Stomach (tissue), 19 donors: ENCODE measurements at regions of chr2 and their contacts with region 1.

Region 1: GRCh38 chr2:219229305-219230058 is at the starts of genes ANKZF1 and ATG9A:
- DNase-seq: peak; percentile 99 to 100
- H3K4me3 ChIP-seq: peak within 1 kb of the TSS; percentile 64 to 82 (median 78)
- H3K27ac ChIP-seq: peak within 1 kb of the TSS; percentile 95 to 98 (median 96)
- H3K4me1 ChIP-seq: peaks cover 19 to 57% (median 38%) of the 10 kb centered on the region in 4 donors
- H3K27me3 ChIP-seq: no peaks in the 10 kb centered on the region
- CTCF ChIP-seq: no peak
- EP300 ChIP-seq: no peak
- POLR2A ChIP-seq: peak in 2 of 4 donors; percentile 32 to 79
- total RNA-seq, gene ANKZF1: 33.9 to 263 (median 138) TPM
- total RNA-seq, gene ATG9A: 1.4 to 100 (median 23.1) TPM

Region 2: DNA sequence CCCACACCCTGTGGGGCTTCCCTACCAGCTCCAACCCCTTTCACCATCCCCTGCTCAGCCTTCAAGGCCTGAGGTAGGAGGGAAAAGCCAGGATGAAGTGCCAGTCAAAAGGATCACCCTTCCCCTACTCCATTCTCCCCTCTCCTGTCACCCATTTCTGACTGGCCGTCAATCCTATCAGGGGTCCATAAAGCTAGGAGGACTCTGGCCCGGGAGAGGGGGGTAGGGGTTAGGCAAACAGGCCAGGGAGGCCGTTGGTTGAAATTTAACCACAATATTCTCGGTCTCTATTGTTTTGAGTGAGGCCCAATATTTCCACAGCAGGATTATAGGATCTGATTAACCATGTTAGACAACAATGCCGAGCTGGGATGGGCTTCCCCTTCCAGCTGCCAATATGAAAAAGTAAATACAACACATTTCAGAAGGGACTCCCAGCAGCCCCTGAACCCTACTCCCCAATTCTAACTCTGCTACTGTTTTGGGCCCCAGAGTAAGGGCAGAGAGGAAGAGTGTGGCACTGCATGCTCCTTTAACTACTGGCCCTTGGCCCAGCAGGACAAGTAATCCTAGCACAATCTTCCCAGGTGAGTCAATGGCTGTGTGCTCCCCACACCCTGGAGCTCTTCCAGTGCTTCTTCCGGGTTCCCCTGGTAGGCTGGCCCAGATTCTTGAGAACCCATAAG is 158.2 kb before region 1 on chr2:
- intact Hi-C with region 1: no loop called
- DNase-seq: peak; percentile 47 to 62
- H3K4me3 ChIP-seq: no peak overlapping the region
- H3K27ac ChIP-seq: peak overlapping the region; percentile 20 to 76 (median 63)
- H3K4me1 ChIP-seq: peaks cover 6 to 29% (median 20%) of the 10 kb centered on the region in 4 donors
- H3K27me3 ChIP-seq: no peaks in the 10 kb centered on the region
- CTCF ChIP-seq: no peak
- EP300 ChIP-seq: no peak
- POLR2A ChIP-seq: no peak

Region 3: GRCh38 chr2:219279517-219280516 is 50.3 kb after region 1 on chr2:
- intact Hi-C with region 1: loop called (anchors 10 kb)
- DNase-seq: peak; percentile 60 to 95
- H3K4me3 ChIP-seq: peak overlapping the region; percentile 51 to 74 (median 70)
- H3K27ac ChIP-seq: peak overlapping the region; percentile 96 to 100 (median 99)
- H3K4me1 ChIP-seq: peaks cover 22 to 54% (median 35%) of the 10 kb centered on the region in 4 donors
- H3K27me3 ChIP-seq: no peaks in the 10 kb centered on the region
- CTCF ChIP-seq: peak in 1 of 7 experiments; percentile 13
- EP300 ChIP-seq: peak; percentile 12
- POLR2A ChIP-seq: peak in 1 of 4 donors; percentile 21